ENCODE measurements at regions of chr5 and their contacts with region 1.

Region 1: DNA sequence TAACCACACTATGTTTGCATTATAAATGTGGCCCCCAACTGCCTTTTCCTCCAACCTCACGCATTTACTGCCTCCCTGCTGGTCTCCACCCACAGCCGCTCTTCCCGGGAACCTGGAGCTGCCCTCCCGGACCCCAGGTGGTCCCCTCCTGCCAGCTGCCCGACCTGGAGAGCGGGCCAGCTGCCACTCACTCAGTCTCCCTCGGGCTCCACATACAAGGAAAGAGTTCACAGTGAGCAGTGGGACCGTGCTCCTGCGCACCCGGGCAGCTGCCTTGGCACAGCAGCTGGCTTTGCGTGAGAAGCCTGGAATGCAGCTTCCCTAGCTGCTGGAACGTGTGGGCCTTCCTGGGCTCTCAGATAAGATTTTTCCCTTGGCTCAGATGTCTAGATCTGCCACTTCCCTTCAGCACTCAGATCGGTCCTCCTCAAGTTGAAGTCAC is 69.3 kb downstream of the MYO10 start:
- DNase-seq: peak; percentile 63 to 80
- ATAC-seq: no peak
- H3K4me3 ChIP-seq: no peak overlapping the region
- H3K27ac ChIP-seq: peak overlapping the region in 1 of 2 donors; percentile 11
- H3K4me1 ChIP-seq: peaks cover 0 to 4% of the 10 kb centered on the region in 2 donors
- H3K27me3 ChIP-seq: no peaks in the 10 kb centered on the region

Region 2: DNA sequence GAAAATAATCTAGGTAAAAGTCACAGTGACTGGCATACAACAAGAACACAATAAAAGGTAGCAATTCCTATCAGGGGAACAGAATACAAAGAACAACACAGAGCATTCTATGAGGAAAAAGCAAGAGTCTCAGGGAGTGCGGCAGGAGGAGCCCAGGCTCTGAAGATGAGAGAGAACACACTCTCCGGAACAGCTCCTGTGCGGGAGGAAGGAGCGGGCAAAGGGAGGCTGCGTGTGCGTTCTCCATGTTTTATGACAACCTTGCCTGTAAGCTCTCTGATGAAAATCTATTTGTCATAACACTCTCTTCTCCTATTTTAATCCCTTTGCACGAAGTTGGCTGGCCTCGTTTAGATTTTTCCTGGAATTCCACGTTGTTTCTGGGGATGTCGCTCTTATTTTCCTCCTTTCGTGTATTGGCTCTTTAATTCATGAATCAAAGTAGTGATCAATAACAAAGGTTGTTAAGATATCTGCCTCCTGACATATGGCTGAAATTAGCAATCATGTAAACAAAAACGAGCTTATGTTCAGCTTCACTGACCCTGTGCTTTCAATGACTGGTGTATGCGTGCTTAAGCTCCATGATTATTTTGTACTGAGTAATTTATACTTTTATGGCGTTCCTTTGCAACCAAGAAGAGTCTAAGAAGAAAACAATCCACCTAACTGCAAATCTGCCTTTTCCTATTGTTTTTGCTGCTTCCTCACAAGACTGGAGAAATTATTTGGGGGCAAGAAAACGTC is 40.3 kb before region 1 on chr5:
- intact Hi-C with region 1: loop called in 1 of 2 experiments (anchors 5 kb)
- DNase-seq: no peak
- ATAC-seq: no peak
- H3K4me3 ChIP-seq: peak overlapping the region in 1 of 2 donors; percentile 5
- H3K27ac ChIP-seq: no peak overlapping the region
- H3K4me1 ChIP-seq: peaks cover 0 to 6% of the 10 kb centered on the region in 2 donors
- H3K27me3 ChIP-seq: no peaks in the 10 kb centered on the region

Region 3: GRCh38 chr5:16881251-16881650 is 14.4 kb after region 1 on chr5:
- intact Hi-C with region 1: no loop called
- DNase-seq: no peak
- ATAC-seq: no peak
- H3K4me3 ChIP-seq: no peak overlapping the region
- H3K27ac ChIP-seq: no peak overlapping the region
- H3K4me1 ChIP-seq: peaks cover 0 to 4% of the 10 kb centered on the region in 2 donors
- H3K27me3 ChIP-seq: no peaks in the 10 kb centered on the region

Region 4: GRCh38 chr5:17024686-17025180 is 157.9 kb after region 1 on chr5:
- intact Hi-C with region 1: no loop called
- DNase-seq: no peak
- ATAC-seq: no peak
- H3K4me3 ChIP-seq: no peak overlapping the region
- H3K27ac ChIP-seq: no peak overlapping the region
- H3K4me1 ChIP-seq: no peaks in the 10 kb centered on the region
- H3K27me3 ChIP-seq: no peaks in the 10 kb centered on the region

Region 5: GRCh38 chr5:17087035-17087434 is 220.2 kb after region 1 on chr5:
- intact Hi-C with region 1: no loop called
- DNase-seq: no peak
- ATAC-seq: no peak
- H3K4me3 ChIP-seq: no peak overlapping the region
- H3K27ac ChIP-seq: no peak overlapping the region
- H3K4me1 ChIP-seq: no peaks in the 10 kb centered on the region
- H3K27me3 ChIP-seq: no peaks in the 10 kb centered on the region

Measured in aorta (tissue), 5 donors.